Cardiac septum (tissue), 1 donor: ENCODE measurements at regions of chr6 and their contacts with region 1.

Region 1: DNA sequence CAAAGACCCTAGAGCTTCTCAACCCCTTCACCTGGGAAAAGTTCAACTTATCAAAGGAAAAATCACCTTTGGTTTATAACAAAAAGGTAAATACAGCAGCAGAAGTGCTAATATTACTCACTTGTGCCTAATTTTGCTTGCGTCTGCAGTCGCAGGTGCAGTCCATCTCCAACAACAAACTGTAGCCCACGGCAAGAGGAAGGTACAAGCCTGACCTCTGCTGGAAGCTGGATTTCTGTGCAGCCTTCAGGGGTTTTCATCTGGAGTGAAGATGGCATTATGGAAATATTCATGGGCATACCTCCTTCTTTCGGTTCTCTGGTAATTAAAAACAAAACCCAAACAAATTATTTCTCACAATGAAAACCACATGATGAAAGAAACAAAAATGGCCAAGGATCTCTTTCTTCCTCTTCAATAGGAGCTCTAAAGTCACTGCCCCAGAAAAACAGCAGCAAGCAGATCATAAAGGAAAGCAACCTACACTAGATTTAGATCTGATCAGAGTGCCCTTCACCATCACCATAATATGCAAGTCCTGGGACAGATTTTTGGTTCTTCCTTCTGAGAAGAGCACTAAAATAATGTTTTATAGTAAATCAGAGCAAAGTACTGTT is 7.8 kb downstream of the UBE3D start:
- DNase-seq: no peak

Region 2: GRCh38 chr6:82247634-82248232 is 810.1 kb before region 1 on chr6 and contains the start of gene IBTK:
- intact Hi-C with region 1: loop called (anchors 2 kb)
- DNase-seq: peak; percentile 97
- total RNA-seq, gene IBTK: 36.5 TPM

Region 3: DNA sequence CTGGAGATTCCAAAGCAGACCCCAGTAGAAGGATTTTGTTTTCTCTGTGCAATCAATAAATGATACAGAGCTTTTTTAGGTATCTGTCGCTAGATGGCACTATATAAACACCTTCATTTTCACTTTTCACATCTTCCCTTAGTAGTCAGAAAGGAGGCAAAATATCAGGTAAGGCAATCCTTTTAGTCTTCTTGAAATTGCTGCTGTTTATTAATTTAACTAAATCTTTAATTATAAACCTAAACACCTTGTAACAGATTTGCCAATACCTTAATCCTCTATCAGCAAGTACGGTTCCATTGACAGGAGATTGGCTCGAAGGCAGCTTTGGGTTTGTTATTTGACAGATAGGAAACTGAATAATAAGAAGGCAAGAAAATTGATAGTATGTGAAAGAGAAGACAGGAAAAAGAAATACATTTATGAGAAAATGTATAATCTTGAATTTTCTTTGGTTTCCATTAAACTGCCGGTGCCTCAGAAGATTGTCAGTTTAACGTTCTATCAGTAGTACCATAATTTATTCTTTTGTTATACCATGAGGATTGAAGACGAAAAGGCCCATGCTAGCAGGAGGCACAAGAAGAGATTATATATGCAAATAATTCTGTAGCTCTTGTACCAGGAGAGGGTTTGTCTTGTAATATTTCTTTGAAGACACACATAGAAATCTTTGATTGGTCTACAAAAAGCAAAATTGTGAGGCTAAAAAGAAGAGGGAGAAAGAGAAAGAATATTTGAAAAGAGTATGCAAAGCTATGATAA is 786.8 kb before region 1 on chr6:
- intact Hi-C with region 1: loop called (anchors 5 kb)
- DNase-seq: no peak

Region 4: DNA sequence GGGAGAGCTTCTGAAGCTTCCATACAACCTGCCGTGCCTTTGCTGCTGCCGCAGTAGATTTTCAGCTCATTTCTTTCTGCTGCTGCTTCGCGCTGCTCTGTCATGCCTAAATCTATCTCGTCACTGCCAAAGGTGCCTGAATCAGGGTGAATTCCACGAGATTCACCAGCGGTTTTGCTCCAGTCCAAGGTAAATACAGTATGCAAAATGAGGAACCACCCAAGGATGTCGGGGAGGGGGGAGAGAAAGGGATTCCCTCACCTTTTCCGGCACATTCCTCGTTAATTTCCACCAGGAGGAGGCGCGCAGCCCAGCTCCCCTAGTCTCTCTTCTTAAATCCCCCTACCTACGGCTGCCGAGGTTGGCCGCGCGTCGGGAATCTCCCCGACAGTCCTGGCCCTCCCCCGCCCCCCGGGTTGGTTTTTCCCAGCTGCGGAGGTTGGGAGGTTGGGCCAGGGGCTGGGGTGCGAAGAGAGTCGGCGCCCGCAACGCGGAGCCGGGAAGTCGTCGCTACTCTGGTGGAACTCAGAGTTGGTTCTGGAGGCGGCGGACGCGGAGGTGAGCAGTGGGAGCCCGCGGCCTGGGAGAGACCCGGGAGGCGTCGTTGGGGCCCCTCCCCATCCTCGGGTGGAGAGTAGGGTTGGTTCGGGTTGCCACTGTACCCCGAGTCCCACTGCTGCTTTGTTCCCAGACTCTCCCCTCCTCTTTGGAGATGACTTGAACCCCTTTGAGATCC is 694.3 kb before region 1 on chr6 and contains the start of gene TPBG:
- intact Hi-C with region 1: loop called (anchors 10 kb)
- DNase-seq: no peak
- total RNA-seq, gene TPBG: 4.9 TPM